Heart left ventricle (tissue), 16 donors: ENCODE measurements at regions of chr11 and their contacts with region 1.

Region 1: DNA sequence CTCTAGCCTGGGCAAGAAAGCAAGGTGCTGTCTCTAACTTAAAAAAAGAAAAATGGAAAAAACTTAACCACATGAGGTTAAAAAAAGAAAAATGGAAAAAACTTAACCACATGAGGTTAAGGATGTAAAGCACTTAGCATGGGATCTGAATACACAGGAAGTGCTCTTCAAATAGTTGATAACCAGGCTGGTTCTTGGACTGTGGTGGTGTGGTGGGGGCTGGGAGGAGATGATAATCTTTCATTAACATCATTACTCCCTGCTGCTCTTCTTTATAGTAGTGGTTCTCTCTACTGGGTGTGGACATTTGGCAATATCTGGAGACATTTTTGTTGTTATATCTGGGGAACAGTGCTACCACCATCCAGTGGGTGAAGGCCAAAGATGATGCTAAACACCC is 88.4 kb downstream of the TTC17 start:
- DNase-seq: no peak
- ATAC-seq: no peak
- H3K4me3 ChIP-seq: no peak overlapping the region
- H3K27ac ChIP-seq: no peak overlapping the region
- H3K4me1 ChIP-seq: no peaks in the 10 kb centered on the region
- H3K27me3 ChIP-seq: no peaks in the 10 kb centered on the region
- CTCF ChIP-seq: no peak
- POLR2A ChIP-seq: no peak

Region 2: DNA sequence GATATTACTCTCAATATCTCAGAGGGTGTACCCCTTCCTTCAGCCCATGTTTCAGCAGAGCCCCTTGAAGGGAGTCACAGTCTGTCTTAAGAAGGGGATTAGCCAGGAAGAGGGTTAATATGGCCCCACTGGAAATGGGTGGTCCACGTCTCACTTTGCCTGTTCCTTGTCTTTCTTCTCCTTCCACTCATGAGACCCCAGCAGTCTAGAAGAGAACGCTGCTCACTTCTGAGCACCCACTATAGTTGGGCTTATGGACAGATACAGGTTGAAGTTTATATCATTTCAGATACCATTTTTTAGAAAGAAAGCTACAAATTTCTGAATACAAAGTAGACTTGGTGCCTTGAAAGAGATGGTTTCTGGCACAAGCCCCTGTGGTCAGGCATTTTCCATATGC is 274.7 kb before region 1 on chr11:
- intact Hi-C with region 1: no loop called
- DNase-seq: no peak
- ATAC-seq: no peak
- H3K4me3 ChIP-seq: no peak overlapping the region
- H3K27ac ChIP-seq: no peak overlapping the region
- H3K4me1 ChIP-seq: no peaks in the 10 kb centered on the region
- H3K27me3 ChIP-seq: peaks cover 0 to 6% (median 0%) of the 10 kb centered on the region in 9 donors
- CTCF ChIP-seq: no peak
- POLR2A ChIP-seq: no peak

Region 3: GRCh38 chr11:43381802-43382201 is 65.3 kb before region 1 on chr11:
- intact Hi-C with region 1: loop called in 1 of 10 experiments (anchors 10 kb)
- DNase-seq: no peak
- ATAC-seq: no peak
- H3K4me3 ChIP-seq: no peak overlapping the region
- H3K27ac ChIP-seq: no peak overlapping the region
- H3K4me1 ChIP-seq: peaks cover 0 to 21% (median 0%) of the 10 kb centered on the region in 12 donors
- H3K27me3 ChIP-seq: no peaks in the 10 kb centered on the region
- CTCF ChIP-seq: no peak
- POLR2A ChIP-seq: no peak

Region 4: GRCh38 chr11:43518408-43519160 is 71.4 kb after region 1 on chr11:
- intact Hi-C with region 1: no loop called
- DNase-seq: no peak
- ATAC-seq: no peak
- H3K4me3 ChIP-seq: no peak overlapping the region
- H3K27ac ChIP-seq: no peak overlapping the region
- H3K4me1 ChIP-seq: no peaks in the 10 kb centered on the region
- H3K27me3 ChIP-seq: peaks cover 0 to 20% (median 0%) of the 10 kb centered on the region in 9 donors
- CTCF ChIP-seq: no peak
- POLR2A ChIP-seq: no peak